Heart left ventricle (tissue), 16 donors: ENCODE measurements at regions of chr15 and their contacts with region 1.

Region 1: DNA sequence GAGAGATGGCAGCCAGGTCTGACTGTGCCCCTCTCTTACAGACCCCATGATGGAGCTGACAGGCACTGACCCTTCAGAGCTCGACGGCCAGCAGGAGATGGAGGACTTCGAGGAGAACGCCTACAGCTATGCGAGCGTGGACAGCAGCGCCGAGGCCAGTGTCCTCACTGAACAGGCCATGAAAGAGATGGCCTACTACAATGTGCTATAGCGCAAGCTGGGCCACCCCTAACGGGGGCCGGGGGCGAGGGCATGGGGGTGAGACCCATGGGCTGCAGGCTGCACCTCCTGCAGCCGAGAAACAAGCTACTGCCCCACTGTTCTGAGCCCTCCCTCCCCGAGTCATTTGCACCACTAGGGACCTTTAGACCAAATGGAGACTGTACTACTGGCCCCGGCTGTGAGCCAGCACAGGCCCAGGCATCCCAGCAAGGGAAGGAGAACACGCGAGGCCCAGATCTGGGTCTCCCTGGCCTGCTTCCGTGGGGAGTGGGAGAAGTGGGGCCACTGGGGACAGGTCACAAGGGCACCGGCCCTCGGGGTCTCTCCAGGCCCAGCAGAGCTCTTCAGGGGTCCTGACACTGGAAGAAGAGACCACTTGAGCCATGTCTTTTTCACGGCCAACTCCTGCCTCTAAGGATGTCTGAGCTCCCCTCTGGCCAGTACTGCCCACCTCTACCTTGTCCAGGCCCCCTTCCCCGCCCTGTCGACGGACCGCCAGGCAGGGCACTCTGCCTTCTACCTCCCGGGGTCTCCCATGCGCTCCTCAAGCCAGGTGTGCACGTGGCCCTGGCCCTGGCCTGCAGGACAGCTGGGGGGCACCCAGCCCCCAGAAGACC is 22.4 kb downstream of the IDH2 start:
- DNase-seq: no peak
- ATAC-seq: peak in 2 of 4 donors; percentile 4 to 10
- H3K4me3 ChIP-seq: no peak overlapping the region
- H3K27ac ChIP-seq: no peak overlapping the region
- H3K4me1 ChIP-seq: peaks cover 0 to 7% (median 0%) of the 10 kb centered on the region in 12 donors
- H3K27me3 ChIP-seq: no peaks in the 10 kb centered on the region
- CTCF ChIP-seq: no peak
- POLR2A ChIP-seq: no peak

Region 2: DNA sequence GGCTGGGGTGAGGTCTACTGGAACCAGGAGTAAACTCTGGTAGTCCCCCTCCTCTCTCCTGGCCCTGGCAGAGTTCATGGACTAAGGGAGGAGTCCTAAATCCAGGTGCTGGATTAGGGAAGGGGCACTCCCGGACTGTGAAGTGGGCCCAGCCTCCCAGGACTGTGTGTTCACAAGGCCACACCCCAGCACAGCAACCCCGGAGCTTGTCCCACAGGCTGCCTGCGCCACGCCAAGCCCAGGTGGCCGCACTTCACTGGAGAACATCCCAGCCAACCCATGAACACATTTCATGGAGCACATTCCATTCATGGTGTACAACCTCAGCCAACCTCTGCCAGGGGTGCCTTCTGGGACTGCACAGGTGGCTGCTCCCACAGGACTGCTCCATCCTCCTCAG is 175.3 kb before region 1 on chr15:
- intact Hi-C with region 1: loop called in 2 of 10 experiments (anchors 2 to 5 kb)
- DNase-seq: no peak
- ATAC-seq: no peak
- H3K4me3 ChIP-seq: no peak overlapping the region
- H3K27ac ChIP-seq: no peak overlapping the region
- H3K4me1 ChIP-seq: peaks cover 0 to 9% (median under 1%) of the 10 kb centered on the region in 12 donors
- H3K27me3 ChIP-seq: no peaks in the 10 kb centered on the region
- CTCF ChIP-seq: no peak
- POLR2A ChIP-seq: no peak

Region 3: DNA sequence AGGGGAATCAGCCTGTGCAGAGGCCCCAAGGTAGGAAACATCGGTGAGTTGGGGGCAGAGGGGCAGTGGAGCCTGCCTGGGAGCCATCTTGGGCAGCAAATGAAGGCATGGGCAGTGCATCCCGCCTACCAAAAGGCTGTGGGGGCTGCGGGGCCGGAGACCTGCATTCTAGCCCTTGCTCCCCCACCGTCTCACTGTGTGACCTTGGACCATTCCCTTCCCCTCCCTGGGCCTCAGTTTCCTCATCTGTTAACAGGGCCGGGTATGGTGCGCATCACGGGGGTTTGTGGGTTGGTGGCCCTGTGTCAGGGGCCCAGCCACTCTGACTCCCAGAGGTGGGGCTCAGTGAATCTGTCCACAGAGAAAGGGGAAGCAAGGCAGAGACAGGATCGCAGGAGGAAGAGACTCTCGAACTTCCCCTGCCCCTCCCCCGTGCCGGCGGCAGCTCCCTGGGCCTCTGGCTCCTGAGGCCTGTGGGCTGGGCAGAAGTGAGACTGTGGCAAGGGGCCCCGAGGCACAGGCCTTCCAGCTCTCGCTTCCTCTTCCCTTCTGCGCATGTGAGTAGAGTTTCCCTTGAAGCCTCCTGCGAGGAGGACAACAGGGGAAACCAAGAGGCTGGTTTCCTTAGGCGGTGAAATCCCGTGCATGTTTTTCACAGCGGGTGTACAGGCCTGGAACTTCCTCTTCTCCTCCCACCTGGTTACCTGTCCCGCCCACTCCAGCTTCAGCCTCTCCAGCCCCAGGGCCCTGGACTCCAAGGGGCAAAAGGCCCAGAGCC is 20.4 kb before region 1 on chr15:
- intact Hi-C with region 1: no loop called
- DNase-seq: peak; percentile 78 to 89 (median 85)
- ATAC-seq: peak; percentile 39 to 82 (median 70)
- H3K4me3 ChIP-seq: peak overlapping the region in 1 of 12 donors; percentile 1
- H3K27ac ChIP-seq: peak overlapping the region in 11 of 12 donors; percentile 7 to 90 (median 42)
- H3K4me1 ChIP-seq: peaks cover 0 to 80% (median 45%) of the 10 kb centered on the region in 12 donors
- H3K27me3 ChIP-seq: no peaks in the 10 kb centered on the region
- CTCF ChIP-seq: no peak
- POLR2A ChIP-seq: no peak